Sigmoid colon (tissue), 7 donors: ENCODE measurements at regions of chr12 and their contacts with region 1.

Region 1: DNA sequence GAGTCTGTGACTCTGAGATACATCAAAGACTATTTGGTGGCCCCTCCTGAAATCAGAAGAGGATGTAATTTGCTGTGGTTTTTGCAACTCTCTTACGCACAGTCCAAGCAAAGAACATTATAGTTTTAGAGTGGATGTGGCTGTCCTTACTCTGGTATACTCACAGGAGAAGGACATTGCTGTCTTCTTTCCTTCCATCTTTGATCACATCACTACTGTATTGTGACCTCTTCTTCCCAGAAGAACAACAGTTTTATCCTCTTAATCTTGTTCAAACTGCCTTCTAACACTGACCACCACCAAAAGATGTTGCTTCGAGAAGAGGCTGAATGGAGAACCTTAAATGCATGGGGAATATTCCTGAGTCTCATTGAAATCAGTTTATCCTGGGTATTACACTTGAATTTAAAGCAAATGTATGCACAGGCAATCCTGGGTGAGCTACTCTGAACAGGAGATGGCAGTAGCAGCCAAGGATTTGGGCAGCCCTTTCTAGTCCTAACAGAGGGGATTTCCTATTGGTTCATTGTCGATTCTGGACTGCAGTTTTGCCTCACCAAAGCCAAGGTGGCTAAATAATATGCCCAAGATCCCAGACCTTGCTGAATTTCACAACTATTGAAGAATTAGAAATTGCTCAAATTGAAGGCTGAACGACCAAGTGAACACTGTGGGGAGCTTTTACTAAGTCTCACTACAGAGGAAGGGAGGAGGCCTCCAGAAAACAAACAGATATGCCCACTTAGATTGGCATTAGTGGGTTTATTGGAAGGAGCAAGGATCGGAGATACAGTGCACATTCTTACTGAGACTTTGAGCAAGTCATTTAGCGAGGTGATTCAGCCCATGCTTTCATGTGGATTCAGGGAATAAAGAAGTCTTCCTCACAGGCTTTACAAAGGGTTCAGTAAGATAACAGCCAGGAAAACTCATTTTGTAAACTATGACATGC is 282.8 kb downstream of the PAWR start:
- DNase-seq: peak; percentile 64
- H3K4me3 ChIP-seq: no peak overlapping the region
- H3K27ac ChIP-seq: peak overlapping the region; percentile 38 to 69 (median 46)
- H3K4me1 ChIP-seq: peaks cover 0 to 23% (median 22%) of the 10 kb centered on the region in 4 donors
- H3K27me3 ChIP-seq: no peaks in the 10 kb centered on the region
- CTCF ChIP-seq: peak; percentile 34 to 63 (median 50)
- EP300 ChIP-seq: no peak
- POLR2A ChIP-seq: no peak

Region 2: GRCh38 chr12:79547735-79548609 is 140.0 kb after region 1 on chr12:
- intact Hi-C with region 1: loop called (anchors 5 kb)
- DNase-seq: no peak
- H3K4me3 ChIP-seq: no peak overlapping the region
- H3K27ac ChIP-seq: peak overlapping the region in 1 of 4 donors; percentile 64
- H3K4me1 ChIP-seq: peaks cover 0 to 24% (median 12%) of the 10 kb centered on the region in 4 donors
- H3K27me3 ChIP-seq: no peaks in the 10 kb centered on the region
- CTCF ChIP-seq: peak; percentile 48 to 71 (median 60)
- EP300 ChIP-seq: no peak
- POLR2A ChIP-seq: no peak

Region 3: DNA sequence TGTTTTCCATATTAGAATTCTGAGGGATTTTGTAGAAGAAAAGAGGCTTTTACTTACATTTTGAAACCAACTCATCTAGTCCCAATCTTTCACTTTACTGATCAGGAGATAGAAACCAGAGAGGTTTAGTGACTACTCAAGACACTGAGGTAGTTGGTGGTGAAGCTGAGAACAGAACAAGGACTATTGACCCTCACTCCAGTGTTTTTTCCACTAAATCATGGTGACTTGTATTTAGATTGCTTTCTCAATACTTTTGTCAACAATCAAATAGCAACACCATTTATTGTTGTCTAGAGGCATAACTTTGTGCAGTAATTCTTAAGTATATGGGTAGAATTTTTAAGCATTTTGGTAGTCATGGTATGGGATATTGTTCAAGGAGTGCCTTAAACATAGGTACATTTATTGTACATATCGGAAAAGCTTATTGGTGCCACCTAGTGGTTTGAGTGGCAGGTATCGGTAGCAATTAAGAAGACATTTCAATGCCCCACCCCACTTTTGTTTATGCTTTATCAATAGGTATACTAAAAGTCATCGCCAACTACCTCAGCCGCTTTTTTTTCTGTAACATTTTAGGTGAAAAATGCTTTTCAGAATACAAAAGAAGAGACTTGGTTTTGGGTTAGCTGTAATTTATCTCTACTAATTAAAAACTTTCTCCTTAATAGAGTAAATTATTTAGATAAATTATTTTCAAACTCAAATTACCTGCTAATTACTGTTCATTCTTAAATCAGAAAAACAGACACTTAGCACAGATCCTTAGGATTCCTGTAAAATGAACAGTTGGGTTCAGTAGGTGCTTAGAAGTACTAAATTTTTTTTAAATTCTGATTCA is 330.1 kb after region 1 on chr12:
- intact Hi-C with region 1: loop called (anchors 2 kb)
- DNase-seq: no peak
- H3K4me3 ChIP-seq: no peak overlapping the region
- H3K27ac ChIP-seq: no peak overlapping the region
- H3K4me1 ChIP-seq: no peaks in the 10 kb centered on the region
- H3K27me3 ChIP-seq: no peaks in the 10 kb centered on the region
- CTCF ChIP-seq: peak; percentile 11 to 64 (median 51)
- EP300 ChIP-seq: no peak
- POLR2A ChIP-seq: no peak